Activated B cell treated with CpG ODN at 0.5 μM for 24 hours (primary cell): ENCODE measurements at regions of chr1 and their contacts with region 1.

Region 1: DNA sequence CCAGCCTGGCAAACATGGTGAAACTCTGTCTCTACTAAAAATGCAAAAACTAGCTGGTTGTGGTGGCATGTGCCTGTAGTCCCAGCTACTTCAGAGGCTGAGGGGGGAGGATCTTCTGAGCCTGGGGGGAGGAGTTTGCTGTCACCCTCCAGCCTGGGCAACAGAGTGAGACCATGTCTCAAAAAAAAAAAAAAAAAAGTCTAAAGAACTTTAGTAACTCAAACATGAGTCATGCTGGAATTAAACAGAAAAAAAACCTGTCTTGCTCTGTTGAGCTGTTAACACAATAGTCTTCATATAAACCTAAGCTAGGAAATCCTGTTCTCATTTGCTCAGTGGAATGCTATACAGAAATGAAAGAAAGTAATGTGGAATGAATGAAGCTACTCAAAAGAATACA is 16.7 kb upstream of the DISP1 start:
- DNase-seq: no peak
- ATAC-seq: peak; percentile 99
- H3K4me3 Mint-ChIP-seq: no peak overlapping the region
- H3K27ac Mint-ChIP-seq: peak overlapping the region; percentile 75
- H3K4me1 Mint-ChIP-seq: peaks cover 22% of the 10 kb centered on the region
- H3K27me3 Mint-ChIP-seq: no peaks in the 10 kb centered on the region
- CTCF ChIP-seq: no peak

Region 2: DNA sequence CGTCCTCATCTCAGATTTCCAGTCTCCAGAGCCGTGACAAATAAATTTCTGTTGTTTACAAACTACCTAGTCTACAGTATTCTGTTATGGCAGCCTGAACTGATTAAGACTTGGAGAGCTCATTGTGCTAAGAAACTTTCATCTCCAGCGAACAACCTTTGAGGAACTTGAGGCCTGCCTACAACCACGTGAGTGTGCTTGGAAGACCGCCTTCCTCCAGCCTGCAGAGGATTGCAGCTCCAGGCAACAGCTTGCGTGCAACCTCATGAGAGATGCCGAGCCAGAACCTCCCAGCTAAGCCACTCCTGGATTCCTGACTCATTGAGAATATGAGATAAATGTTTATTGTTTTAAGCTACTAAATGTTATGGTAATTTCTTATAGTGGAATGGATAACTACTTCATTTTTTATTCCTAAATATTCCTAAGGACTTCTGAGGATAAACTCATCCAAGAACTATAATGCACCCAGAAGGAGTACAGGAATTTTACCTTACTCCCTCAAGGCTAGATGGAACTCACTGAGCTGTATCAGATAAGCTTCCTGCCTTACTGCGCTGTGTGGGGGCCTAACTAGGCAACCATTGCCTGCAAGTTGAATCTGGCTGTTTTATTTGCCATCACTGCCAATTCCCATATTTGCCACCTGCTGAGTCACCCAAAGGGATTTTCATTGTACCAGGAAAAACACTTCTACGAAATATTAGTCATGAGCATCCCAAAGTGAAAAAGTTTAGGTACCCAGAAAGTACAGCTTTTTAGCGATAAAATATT is 43.6 kb before region 1 on chr1:
- CTCF ChIA-PET with region 1: interaction called, 4 read pairs
- POLR2A ChIA-PET with region 1: interaction called, 11 read pairs
- intact Hi-C with region 1: no loop called
- DNase-seq: no peak
- ATAC-seq: no peak
- H3K4me3 Mint-ChIP-seq: no peak overlapping the region
- H3K27ac Mint-ChIP-seq: peak overlapping the region; percentile 61
- H3K4me1 Mint-ChIP-seq: peaks cover 65% of the 10 kb centered on the region
- H3K27me3 Mint-ChIP-seq: no peaks in the 10 kb centered on the region
- CTCF ChIP-seq: no peak

Region 3: GRCh38 chr1:222814536-222815439 is 16.7 kb after region 1 on chr1 and contains the start of gene DISP1:
- CTCF ChIA-PET with region 1: interaction called, 3 read pairs
- POLR2A ChIA-PET with region 1: interaction called, 7 read pairs
- intact Hi-C with region 1: loop called (anchors 1 kb)
- DNase-seq: peak; percentile 66
- ATAC-seq: peak; percentile 83
- H3K4me3 Mint-ChIP-seq: peak within 1 kb of the TSS; percentile 95
- H3K27ac Mint-ChIP-seq: peak within 1 kb of the TSS; percentile 95
- H3K4me1 Mint-ChIP-seq: peaks cover 43% of the 10 kb centered on the region
- H3K27me3 Mint-ChIP-seq: peaks cover 4% of the 10 kb centered on the region
- CTCF ChIP-seq: no peak
- total RNA-seq, gene DISP1: 4.5 and 5.1 TPM in 2 replicates